Activated B cell treated with CpG ODN at 0.5 μM for 24 hours (primary cell): ENCODE measurements at regions of chr12 and their contacts with region 1.

Region 1: GRCh38 chr12:67681105-67681778 is 32.7 kb downstream of the DYRK2 start:
- DNase-seq: no peak
- ATAC-seq: no peak
- H3K4me3 Mint-ChIP-seq: no peak overlapping the region
- H3K27ac Mint-ChIP-seq: no peak overlapping the region
- H3K4me1 Mint-ChIP-seq: no peaks in the 10 kb centered on the region
- H3K27me3 Mint-ChIP-seq: no peaks in the 10 kb centered on the region
- CTCF ChIP-seq: no peak

Region 2: DNA sequence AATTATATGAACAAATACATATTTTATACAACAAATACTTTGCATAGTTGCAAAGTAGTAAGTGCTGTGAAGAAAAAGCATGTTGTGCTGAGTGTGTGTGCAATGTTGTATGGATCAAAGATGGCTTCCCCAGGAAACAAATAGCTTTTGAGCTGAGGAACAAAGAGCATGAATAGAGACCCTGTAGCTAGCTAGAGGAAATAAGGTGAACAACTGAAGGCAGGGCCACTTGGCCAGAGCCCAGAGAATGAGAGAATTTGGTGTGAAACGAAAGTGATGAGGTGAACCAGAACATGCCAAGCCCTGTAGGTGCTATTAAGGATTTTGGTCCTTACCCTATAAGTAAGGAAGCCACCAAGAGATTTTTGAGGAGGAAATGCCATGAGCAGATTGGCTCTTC is 15.6 kb before region 1 on chr12:
- CTCF ChIA-PET with region 1: no interaction called
- POLR2A ChIA-PET with region 1: no interaction called
- intact Hi-C with region 1: loop called (anchors 2 kb)
- DNase-seq: no peak
- ATAC-seq: no peak
- H3K4me3 Mint-ChIP-seq: no peak overlapping the region
- H3K27ac Mint-ChIP-seq: no peak overlapping the region
- H3K4me1 Mint-ChIP-seq: peaks cover 22% of the 10 kb centered on the region
- H3K27me3 Mint-ChIP-seq: no peaks in the 10 kb centered on the region
- CTCF ChIP-seq: no peak